ENCODE measurements at regions of chr17 and their contacts with region 1.

Region 1: DNA sequence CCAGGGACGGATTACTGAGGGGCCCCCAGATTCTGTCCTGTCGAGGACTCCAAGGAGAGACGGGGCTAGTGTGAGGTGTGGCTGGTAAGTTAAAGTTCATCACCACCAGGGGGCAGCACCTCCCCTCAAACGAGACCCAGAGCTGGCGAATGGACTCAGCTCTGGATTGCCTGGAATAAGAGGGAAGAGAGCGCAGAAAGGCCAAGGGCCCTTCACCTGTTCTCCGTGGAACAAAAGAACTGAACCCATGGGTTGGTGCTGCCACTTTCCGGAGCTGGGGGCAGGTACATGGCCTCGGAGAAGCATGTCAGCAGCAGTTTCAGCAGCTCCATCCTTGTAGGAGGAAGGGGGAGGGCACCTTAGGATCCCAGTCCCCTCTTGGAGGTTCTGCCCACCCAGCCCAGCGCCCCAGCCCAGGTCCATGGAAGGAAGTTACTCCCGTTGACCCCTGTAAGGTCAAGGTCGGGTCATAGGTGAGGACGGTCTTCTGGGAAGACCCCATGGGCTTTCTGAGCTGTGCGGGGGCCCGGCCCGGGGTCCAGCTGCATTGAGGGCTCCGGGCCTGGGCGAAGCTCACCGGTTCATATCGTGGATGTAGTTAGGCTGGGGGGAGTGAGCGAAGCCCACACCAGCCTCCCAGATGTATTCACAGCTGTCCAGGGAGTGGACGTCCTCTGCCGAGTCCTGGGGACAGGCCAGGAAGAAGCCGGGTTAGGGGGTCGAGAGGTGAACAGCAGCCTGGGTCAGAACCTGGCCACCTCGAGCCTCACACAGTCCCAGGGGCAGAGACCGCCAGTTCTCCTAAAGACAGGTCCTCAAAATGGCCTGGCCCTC is 10.7 kb downstream of the HID1 start:
- DNase-seq: no peak
- ATAC-seq: peak; percentile 86
- H3K4me3 ChIP-seq: no peak overlapping the region
- H3K27ac ChIP-seq: no peak overlapping the region
- H3K4me1 ChIP-seq: no peaks in the 10 kb centered on the region; the same call in 1 of the 2 replicates
- H3K27me3 ChIP-seq: no peaks in the 10 kb centered on the region
- CTCF ChIP-seq: peak; percentile 62 to 83 (median 72)
- EP300 ChIP-seq: no peak
- POLR2A ChIP-seq: no peak
- RAD21 ChIP-seq: peak; percentile 75

Region 2: GRCh38 chr17:74757486-74757885 is 204.4 kb before region 1 on chr17:
- CTCF ChIA-PET with region 1: no interaction called
- POLR2A ChIA-PET with region 1: no interaction called
- RAD21 ChIA-PET with region 1: no interaction called
- SMC1A ChIA-PET with region 1: no interaction called
- in situ Hi-C with region 1: no loop called
- intact Hi-C with region 1: no loop called
- DNase-seq: no peak
- ATAC-seq: no peak
- H3K4me3 ChIP-seq: no peak overlapping the region
- H3K27ac ChIP-seq: no peak overlapping the region
- H3K4me1 ChIP-seq: peaks cover 24% of the 10 kb centered on the region
- H3K27me3 ChIP-seq: no peaks in the 10 kb centered on the region
- CTCF ChIP-seq: no peak
- EP300 ChIP-seq: no peak
- POLR2A ChIP-seq: no peak
- RAD21 ChIP-seq: no peak

Region 3: DNA sequence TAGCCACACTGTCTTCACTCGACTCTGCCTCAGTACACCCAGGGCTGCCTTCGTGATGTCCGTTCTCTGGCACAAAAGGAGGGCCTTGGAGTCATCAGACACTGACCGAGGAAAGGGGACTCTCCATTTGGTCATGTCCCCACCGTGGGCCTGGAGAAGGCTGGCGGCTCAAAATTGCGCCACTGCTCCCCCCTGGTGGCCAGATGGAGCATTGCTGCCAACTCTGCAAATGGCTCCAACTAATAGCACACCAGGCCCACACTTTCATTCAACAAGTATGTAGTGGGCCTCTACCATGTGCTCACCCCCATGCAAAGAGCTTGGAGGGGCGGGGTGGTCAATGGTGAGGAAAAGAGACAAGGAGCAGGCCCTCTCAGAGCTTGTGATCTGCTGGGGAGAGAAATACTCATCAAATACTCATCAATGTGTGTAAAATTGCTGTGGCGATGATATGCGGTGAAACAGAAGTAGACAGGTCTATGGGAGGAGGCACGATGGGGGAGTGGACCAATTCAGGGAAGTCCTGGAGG is 96.9 kb before region 1 on chr17:
- CTCF ChIA-PET with region 1: interaction called, 23 read pairs
- POLR2A ChIA-PET with region 1: no interaction called
- RAD21 ChIA-PET with region 1: interaction called, 15 read pairs
- SMC1A ChIA-PET with region 1: interaction called, 6 read pairs
- in situ Hi-C with region 1: no loop called
- intact Hi-C with region 1: no loop called
- DNase-seq: no peak
- ATAC-seq: peak; percentile 81
- H3K4me3 ChIP-seq: no peak overlapping the region
- H3K27ac ChIP-seq: no peak overlapping the region
- H3K4me1 ChIP-seq: peaks cover 4% of the 10 kb centered on the region; the same call in 1 of the 2 replicates
- H3K27me3 ChIP-seq: peaks cover 5 to 8% of the 10 kb centered on the region in 2 experiments
- CTCF ChIP-seq: peak; percentile 91 to 98 (median 97)
- EP300 ChIP-seq: no peak
- POLR2A ChIP-seq: no peak
- RAD21 ChIP-seq: peak; percentile 71

Region 4: DNA sequence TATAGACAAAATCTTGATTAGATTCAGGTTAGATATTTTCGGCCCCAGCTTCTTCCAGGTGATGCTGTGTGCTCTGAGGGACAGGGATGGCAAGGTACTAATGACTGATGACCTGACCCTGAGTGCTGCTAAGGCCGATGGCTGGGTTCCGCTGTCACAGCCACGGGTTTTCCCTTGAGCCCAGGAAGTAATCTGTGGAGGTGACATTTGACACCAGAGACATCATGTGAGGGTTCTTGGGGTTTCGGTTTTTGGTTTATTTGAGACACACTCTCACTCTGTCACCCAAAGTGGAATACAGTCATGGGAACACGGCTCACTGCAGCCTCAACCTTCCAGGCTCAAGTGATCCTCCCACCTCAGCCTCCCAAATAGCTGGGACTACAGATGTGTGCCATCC is 16.3 kb before region 1 on chr17:
- CTCF ChIA-PET with region 1: interaction called, 21 read pairs
- POLR2A ChIA-PET with region 1: no interaction called
- RAD21 ChIA-PET with region 1: interaction called, 10 read pairs
- SMC1A ChIA-PET with region 1: interaction called, 13 read pairs
- in situ Hi-C with region 1: no loop called
- intact Hi-C with region 1: no loop called
- DNase-seq: peak; percentile 48
- ATAC-seq: peak; percentile 97
- H3K4me3 ChIP-seq: peak overlapping the region; percentile 12; the same call in 1 of the 2 replicates
- H3K27ac ChIP-seq: no peak overlapping the region
- H3K4me1 ChIP-seq: peaks cover 6% of the 10 kb centered on the region; the same call in 1 of the 2 replicates
- H3K27me3 ChIP-seq: no peaks in the 10 kb centered on the region; a peak in 1 of 4 replicates
- CTCF ChIP-seq: no peak
- EP300 ChIP-seq: no peak
- POLR2A ChIP-seq: peak; percentile 52; the same call in 1 of the 2 replicates
- RAD21 ChIP-seq: no peak

Region 5: GRCh38 chr17:75012346-75013091 is 50.6 kb after region 1 on chr17 and contains the start of gene MRPL58:
- CTCF ChIA-PET with region 1: interaction called, 64 read pairs
- POLR2A ChIA-PET with region 1: interaction called, 4 read pairs
- RAD21 ChIA-PET with region 1: interaction called, 39 read pairs
- SMC1A ChIA-PET with region 1: interaction called, 23 read pairs
- in situ Hi-C with region 1: no loop called
- intact Hi-C with region 1: no loop called
- DNase-seq: peak; percentile 60
- ATAC-seq: peak; percentile 95
- H3K4me3 ChIP-seq: peak within 1 kb of the TSS; percentile 94
- H3K27ac ChIP-seq: peak within 1 kb of the TSS; percentile 67
- H3K4me1 ChIP-seq: peaks cover 8% of the 10 kb centered on the region
- H3K27me3 ChIP-seq: no peaks in the 10 kb centered on the region; a peak in 1 of 4 replicates
- CTCF ChIP-seq: peak in 2 of 3 experiments; percentile 22 to 54; a peak in 4 of 6 replicates
- EP300 ChIP-seq: no peak
- POLR2A ChIP-seq: peak; percentile 99
- RAD21 ChIP-seq: no peak
- polyA plus RNA-seq, gene MRPL58: 23.0 to 43.7 TPM

Region 6: DNA sequence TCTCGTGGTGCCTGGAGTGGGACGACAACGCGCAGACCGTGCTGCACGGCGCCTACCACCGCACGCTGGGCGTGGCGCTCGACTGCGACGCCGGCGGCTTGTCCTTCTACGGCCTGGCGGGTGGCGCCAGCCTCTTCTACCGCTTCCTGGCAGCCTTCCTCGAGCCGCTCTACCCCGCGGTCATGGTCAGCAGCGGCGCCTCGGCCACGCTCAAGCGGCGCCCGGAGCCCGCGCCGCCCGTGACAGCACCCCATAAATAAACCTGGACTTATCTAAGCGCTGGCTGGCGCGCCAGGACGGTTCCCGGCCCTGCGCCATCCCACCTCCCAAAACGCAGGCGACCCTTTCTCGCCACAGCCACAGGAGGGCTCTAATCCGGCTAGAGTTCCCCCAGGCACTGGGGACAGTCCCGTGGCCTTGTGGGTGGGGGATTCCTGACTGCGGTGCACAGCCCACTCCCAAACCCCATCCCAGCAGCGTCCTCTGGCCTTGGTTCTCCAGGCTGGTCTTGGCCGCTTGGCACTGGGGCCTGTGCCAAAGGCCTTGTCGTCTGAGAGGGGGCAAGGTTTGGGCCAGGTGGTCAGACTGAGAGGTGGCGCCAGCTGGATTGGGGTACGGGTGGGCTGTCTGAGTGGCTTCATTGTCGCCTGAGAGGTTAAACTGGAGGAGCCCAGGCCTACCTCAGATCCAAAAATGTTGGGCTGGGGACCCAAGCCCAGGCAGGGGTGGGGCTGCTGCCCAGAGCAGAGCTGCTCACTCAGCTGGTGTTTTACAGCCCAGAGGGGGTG is 115.8 kb after region 1 on chr17:
- CTCF ChIA-PET with region 1: interaction called, 7 read pairs
- POLR2A ChIA-PET with region 1: no interaction called
- RAD21 ChIA-PET with region 1: interaction called, 10 read pairs
- SMC1A ChIA-PET with region 1: interaction called, 6 read pairs
- in situ Hi-C with region 1: no loop called
- intact Hi-C with region 1: no loop called
- DNase-seq: no peak
- ATAC-seq: peak; percentile 77
- H3K4me3 ChIP-seq: peak overlapping the region; percentile 47; the same call in 1 of the 2 replicates
- H3K27ac ChIP-seq: peak overlapping the region; percentile 64
- H3K4me1 ChIP-seq: peaks cover 30% of the 10 kb centered on the region
- H3K27me3 ChIP-seq: no peaks in the 10 kb centered on the region
- CTCF ChIP-seq: peak; percentile 41 to 44 (median 42); a peak in 5 of 6 replicates
- EP300 ChIP-seq: no peak; a peak in 1 of 4 replicates
- POLR2A ChIP-seq: peak; percentile 82
- RAD21 ChIP-seq: no peak

Region 7: DNA sequence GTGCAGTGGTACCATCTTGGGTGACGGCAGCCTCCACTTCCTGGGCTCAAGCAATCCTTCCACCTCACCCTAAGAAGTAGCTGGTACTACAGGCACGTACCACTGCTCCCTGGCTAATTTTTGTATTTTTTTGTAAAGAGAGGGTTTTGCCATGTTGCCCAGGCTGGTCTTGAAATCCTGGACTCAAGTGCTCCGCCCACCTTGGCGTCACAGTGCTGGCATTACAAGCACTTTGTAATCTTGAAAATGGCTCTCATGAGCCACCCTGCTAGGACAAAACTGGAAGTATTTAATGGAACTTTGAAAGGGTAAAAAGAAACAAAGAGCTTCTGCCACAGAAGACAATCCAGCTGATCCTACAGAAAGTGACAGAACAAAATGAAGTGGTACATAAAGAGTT is 211.7 kb after region 1 on chr17:
- CTCF ChIA-PET with region 1: interaction called, 78 read pairs
- POLR2A ChIA-PET with region 1: no interaction called
- RAD21 ChIA-PET with region 1: interaction called, 36 read pairs
- SMC1A ChIA-PET with region 1: interaction called, 11 read pairs
- in situ Hi-C with region 1: no loop called
- intact Hi-C with region 1: no loop called
- DNase-seq: no peak
- ATAC-seq: no peak
- H3K4me3 ChIP-seq: no peak overlapping the region
- H3K27ac ChIP-seq: no peak overlapping the region
- H3K4me1 ChIP-seq: no peaks in the 10 kb centered on the region
- H3K27me3 ChIP-seq: no peaks in the 10 kb centered on the region
- CTCF ChIP-seq: no peak
- EP300 ChIP-seq: no peak
- POLR2A ChIP-seq: no peak
- RAD21 ChIP-seq: no peak

Region 8: DNA sequence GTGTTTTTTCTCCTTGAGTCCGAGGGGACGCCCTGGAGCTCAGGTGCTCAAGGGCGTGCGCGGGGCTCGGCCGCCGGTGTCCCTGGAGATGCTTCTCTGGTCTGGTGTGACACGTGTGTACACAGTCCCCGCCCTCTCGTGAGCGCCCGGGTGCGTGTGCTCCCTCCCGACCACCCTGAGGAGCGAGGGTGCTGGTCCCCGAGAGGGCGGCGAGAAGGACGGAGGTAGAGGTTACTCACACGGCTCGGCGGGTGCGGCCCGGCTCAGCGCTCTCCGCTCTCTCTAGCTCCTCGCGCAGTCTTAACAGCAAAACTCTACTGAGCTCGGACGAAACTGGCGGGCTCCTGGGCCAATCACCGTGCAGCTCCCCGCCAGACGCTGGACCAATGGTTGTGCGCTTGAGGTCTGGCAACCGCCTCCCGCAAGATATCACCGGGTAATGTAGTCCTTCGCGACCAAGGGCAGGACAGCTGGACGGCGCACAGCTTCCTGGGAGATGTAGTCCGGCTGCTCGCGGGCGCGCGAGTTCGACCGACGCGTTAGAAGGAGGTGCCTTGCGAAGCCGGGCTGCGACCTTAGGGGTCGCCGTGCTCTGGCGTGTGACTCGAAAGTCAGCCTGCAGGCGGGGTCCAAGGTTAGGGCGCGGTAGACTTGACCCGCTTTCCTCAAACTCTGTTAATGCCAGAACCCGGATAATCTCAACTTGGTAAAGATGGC is 327.4 kb after region 1 on chr17 and contains the start of gene SLC25A19:
- CTCF ChIA-PET with region 1: interaction called, 10 read pairs
- POLR2A ChIA-PET with region 1: no interaction called
- RAD21 ChIA-PET with region 1: interaction called, 8 read pairs
- SMC1A ChIA-PET with region 1: no interaction called
- in situ Hi-C with region 1: no loop called
- intact Hi-C with region 1: no loop called
- DNase-seq: peak; percentile 98
- ATAC-seq: peak; percentile 95
- H3K4me3 ChIP-seq: peak within 1 kb of the TSS; percentile 91
- H3K27ac ChIP-seq: peak within 1 kb of the TSS; percentile 83
- H3K4me1 ChIP-seq: peaks cover 34% of the 10 kb centered on the region
- H3K27me3 ChIP-seq: no peaks in the 10 kb centered on the region
- CTCF ChIP-seq: peak; percentile 30 to 60 (median 37); a peak in 4 of 6 replicates
- EP300 ChIP-seq: no peak
- POLR2A ChIP-seq: peak; percentile 97
- RAD21 ChIP-seq: peak; percentile 51
- polyA plus RNA-seq, gene SLC25A19: 32.9 to 43.1 TPM

Measured in GM12878 (cell line).